ENCODE measurements at regions of chr4 and their contacts with region 1.

Region 1: DNA sequence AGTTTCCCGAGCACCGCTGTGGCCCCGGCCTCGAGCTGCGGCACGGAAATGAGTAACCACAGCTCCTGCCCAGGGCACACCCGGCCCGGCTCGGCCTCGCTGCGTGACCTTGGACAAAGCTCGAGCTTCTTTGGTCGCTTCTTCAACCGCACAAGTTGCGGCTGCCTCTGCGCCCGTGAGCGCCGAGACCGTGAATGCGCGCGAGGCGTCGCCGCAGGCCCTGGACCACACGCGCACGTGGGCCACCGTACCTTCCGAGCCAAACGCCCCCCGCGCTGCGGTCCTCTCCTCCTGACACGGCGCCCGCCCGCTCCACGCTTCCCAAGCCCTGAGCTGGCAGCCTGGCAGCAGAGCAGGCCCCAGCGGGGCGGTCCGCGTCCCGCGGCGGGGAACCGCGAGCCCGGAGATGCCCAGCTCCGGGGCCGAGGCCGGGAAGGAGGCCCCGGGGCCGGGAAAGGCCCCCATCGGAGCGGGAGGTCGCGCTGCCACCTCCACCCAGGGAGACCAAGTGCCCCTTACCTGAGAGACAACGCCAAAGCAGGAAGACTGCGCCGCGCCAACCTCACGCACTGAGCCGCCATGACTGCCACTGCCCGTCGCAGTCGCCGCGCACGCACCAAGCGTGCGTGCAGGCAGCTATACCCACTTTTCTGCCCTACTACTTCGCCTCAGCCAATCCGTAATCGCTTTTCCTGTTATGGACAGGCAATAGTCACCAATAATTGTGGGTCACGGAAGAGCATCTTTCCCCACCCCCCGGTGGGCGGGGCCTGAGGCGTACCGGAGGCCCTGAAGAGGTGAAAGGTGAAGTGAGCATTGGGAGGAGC is at the start of gene GRPEL1:
- DNase-seq: peak; percentile 98
- ATAC-seq: peak; percentile 95
- H3K4me3 ChIP-seq: peak within 1 kb of the TSS; percentile 74
- H3K27ac ChIP-seq: peak within 1 kb of the TSS; percentile 84
- H3K4me1 ChIP-seq: peaks cover 14% of the 10 kb centered on the region
- H3K27me3 ChIP-seq: no peaks in the 10 kb centered on the region; a peak in 1 of 4 replicates
- CTCF ChIP-seq: peak; percentile 5 to 13 (median 7); a peak in 1 of 6 replicates
- EP300 ChIP-seq: no peak
- POLR2A ChIP-seq: peak; percentile 99
- RAD21 ChIP-seq: no peak
- polyA plus RNA-seq, gene GRPEL1: 103 to 119 TPM

Region 2: DNA sequence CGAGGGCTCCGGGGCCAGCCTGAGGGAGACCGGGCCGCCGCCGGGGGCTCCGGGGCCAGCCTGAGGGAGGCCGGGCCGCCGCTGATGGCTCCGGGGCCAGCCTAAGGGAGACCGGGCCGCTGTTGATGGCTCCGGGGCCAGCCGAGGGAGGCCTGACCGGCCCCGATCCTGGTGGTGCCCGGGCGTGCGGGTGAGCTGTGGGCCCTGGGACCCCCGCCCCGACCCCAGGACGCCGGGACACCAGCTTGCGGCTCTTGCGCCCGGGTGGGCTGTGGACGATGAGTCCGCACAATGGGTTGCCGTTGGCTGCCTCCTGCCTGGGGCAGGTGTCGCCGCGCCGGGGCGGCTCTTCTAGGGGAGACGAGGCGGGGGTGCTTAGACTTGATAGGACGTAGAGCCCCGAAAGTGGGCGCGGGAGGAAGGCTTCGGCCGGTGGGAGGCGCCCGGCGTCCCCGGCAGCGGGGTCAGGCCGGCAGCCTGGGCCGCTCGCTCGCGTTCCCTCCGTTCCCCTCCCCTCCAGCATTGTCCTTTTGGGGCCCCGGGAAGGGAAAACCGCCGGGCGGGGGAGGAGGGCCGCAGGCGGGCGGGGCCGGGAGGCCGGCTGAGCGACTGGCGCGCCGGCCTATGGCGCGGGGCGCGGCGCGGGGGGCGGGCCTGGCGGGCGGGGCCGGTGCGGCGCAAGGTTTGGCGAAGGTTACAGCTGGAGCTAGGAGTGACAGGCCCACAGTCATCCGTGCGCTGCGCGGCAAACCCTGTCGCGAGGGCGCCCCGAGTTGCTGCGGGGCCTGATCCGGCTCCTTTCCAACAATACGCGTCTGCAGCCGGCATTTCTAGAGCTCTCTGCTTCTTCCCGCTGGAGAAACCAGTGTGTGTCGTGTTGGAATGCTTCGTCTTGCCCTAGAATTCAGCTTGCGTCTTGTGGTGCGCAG is 284.3 kb before region 1 on chr4:
- CTCF ChIA-PET with region 1: interaction called, 3 read pairs
- POLR2A ChIA-PET with region 1: no interaction called
- RAD21 ChIA-PET with region 1: interaction called, 4 read pairs
- SMC1A ChIA-PET with region 1: interaction called, 9 read pairs
- in situ Hi-C with region 1: no loop called
- intact Hi-C with region 1: loop called (anchors 5 kb)
- DNase-seq: peak; percentile 27
- ATAC-seq: peak; percentile 87
- H3K4me3 ChIP-seq: peak overlapping the region; percentile 89
- H3K27ac ChIP-seq: peak overlapping the region; percentile 88
- H3K4me1 ChIP-seq: 0 out of 2 replicates have a peak, but pooled peaks cover 6% of the 10 kb centered on the region
- H3K27me3 ChIP-seq: no peaks in the 10 kb centered on the region
- CTCF ChIP-seq: peak; percentile 19 to 42 (median 25); a peak in 3 of 6 replicates
- EP300 ChIP-seq: no peak
- POLR2A ChIP-seq: peak; percentile 78; the same call in 1 of the 2 replicates
- RAD21 ChIP-seq: peak; percentile 15; the same call in 1 of the 2 replicates

Region 3: GRCh38 chr4:6799091-6799490 is 268.6 kb before region 1 on chr4:
- CTCF ChIA-PET with region 1: no interaction called
- POLR2A ChIA-PET with region 1: no interaction called
- RAD21 ChIA-PET with region 1: no interaction called
- SMC1A ChIA-PET with region 1: no interaction called
- in situ Hi-C with region 1: no loop called
- intact Hi-C with region 1: no loop called
- DNase-seq: no peak
- ATAC-seq: no peak
- H3K4me3 ChIP-seq: no peak overlapping the region
- H3K27ac ChIP-seq: no peak overlapping the region
- H3K4me1 ChIP-seq: peaks cover 4% of the 10 kb centered on the region; the same call in 1 of the 2 replicates
- H3K27me3 ChIP-seq: no peaks in the 10 kb centered on the region
- CTCF ChIP-seq: no peak
- EP300 ChIP-seq: no peak
- POLR2A ChIP-seq: no peak
- RAD21 ChIP-seq: no peak

Region 4: GRCh38 chr4:6909073-6909965 is 158.3 kb before region 1 on chr4 and contains the start of gene TBC1D14:
- CTCF ChIA-PET with region 1: interaction called, 94 read pairs
- POLR2A ChIA-PET with region 1: interaction called, 18 read pairs
- RAD21 ChIA-PET with region 1: interaction called, 14 read pairs
- SMC1A ChIA-PET with region 1: interaction called, 18 read pairs
- in situ Hi-C with region 1: loop called (anchors 5 kb)
- intact Hi-C with region 1: loop called (anchors 1 kb)
- DNase-seq: no peak
- ATAC-seq: peak; percentile 94
- H3K4me3 ChIP-seq: peak within 1 kb of the TSS; percentile 97
- H3K27ac ChIP-seq: peak within 1 kb of the TSS; percentile 96
- H3K4me1 ChIP-seq: peaks cover 17% of the 10 kb centered on the region
- H3K27me3 ChIP-seq: 0 out of 4 replicates have a peak, but pooled peaks cover 0 to 3% of the 10 kb centered on the region in 2 experiments
- CTCF ChIP-seq: no peak; a peak in 2 of 6 replicates
- EP300 ChIP-seq: no peak
- POLR2A ChIP-seq: peak; percentile 82
- RAD21 ChIP-seq: no peak
- polyA plus RNA-seq, gene TBC1D14: 0.87 to 1.1 TPM

Region 5: GRCh38 chr4:6974138-6974848 is 93.4 kb before region 1 on chr4:
- CTCF ChIA-PET with region 1: interaction called, 80 read pairs
- POLR2A ChIA-PET with region 1: interaction called, 3 read pairs
- RAD21 ChIA-PET with region 1: interaction called, 20 read pairs
- SMC1A ChIA-PET with region 1: interaction called, 9 read pairs
- in situ Hi-C with region 1: no loop called
- intact Hi-C with region 1: loop called (anchors 1 kb)
- DNase-seq: peak; percentile 40
- ATAC-seq: peak; percentile 86
- H3K4me3 ChIP-seq: no peak overlapping the region
- H3K27ac ChIP-seq: no peak overlapping the region
- H3K4me1 ChIP-seq: peaks cover 18% of the 10 kb centered on the region
- H3K27me3 ChIP-seq: no peaks in the 10 kb centered on the region
- CTCF ChIP-seq: peak; percentile 90 to 99 (median 99)
- EP300 ChIP-seq: no peak
- POLR2A ChIP-seq: no peak
- RAD21 ChIP-seq: peak; percentile 82

Region 6: GRCh38 chr4:7013175-7013574 is 54.5 kb before region 1 on chr4:
- CTCF ChIA-PET with region 1: interaction called, 14 read pairs
- POLR2A ChIA-PET with region 1: interaction called, 3 read pairs
- RAD21 ChIA-PET with region 1: interaction called, 3 read pairs
- SMC1A ChIA-PET with region 1: interaction called, 4 read pairs
- in situ Hi-C with region 1: no loop called
- intact Hi-C with region 1: no loop called
- DNase-seq: no peak
- ATAC-seq: peak; percentile 58
- H3K4me3 ChIP-seq: no peak overlapping the region
- H3K27ac ChIP-seq: peak overlapping the region; percentile 85
- H3K4me1 ChIP-seq: peaks cover 17% of the 10 kb centered on the region
- H3K27me3 ChIP-seq: no peaks in the 10 kb centered on the region
- CTCF ChIP-seq: no peak
- EP300 ChIP-seq: no peak
- POLR2A ChIP-seq: no peak
- RAD21 ChIP-seq: no peak

Region 7: DNA sequence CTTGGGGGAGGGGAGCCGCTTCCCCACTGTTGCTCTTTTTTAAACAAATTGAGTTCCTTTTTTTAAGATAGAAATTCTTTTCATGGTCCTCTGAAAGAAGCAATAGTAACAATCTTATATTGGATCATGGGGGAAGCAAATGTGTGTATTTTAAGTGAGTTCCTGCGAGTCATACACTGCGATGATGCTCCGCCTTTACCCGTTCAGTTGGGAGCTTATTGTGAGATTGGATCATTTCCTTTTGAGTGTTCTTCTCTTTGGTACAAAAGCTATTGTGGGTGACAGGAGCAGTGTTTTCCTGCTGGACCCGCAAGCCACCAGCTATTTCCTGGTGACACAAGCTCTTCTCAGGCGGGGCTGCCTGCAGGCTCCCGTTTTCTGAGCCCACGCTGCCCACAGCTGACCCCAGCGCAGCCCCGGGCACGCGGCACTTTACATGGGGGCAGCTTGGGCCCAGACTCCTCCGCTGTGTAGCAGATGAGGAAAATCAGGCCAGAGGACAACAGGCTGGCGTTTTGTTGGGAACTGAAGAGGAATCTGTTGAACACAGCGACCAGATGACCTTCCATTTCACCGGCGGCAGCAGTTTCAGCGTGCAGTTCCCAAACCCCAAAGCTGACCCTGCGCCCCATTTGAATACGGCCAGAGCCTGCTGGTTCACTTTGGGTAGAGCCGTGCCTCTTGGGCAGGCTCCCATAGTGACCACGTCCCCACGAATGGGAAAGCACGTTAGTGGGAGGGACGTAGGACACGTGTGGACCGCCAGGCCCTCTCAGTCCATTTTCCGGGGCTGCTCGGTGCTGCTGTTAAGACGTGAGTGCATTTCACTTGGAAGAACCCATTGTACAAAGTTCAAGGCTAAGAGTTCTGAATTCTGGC is 12.3 kb before region 1 on chr4:
- CTCF ChIA-PET with region 1: interaction called, 41 read pairs
- POLR2A ChIA-PET with region 1: interaction called, 4 read pairs
- RAD21 ChIA-PET with region 1: interaction called, 6 read pairs
- SMC1A ChIA-PET with region 1: interaction called, 6 read pairs
- in situ Hi-C with region 1: no loop called
- intact Hi-C with region 1: no loop called
- DNase-seq: no peak
- ATAC-seq: no peak
- H3K4me3 ChIP-seq: no peak overlapping the region
- H3K27ac ChIP-seq: no peak overlapping the region
- H3K4me1 ChIP-seq: peaks cover 14% of the 10 kb centered on the region
- H3K27me3 ChIP-seq: no peaks in the 10 kb centered on the region
- CTCF ChIP-seq: no peak
- EP300 ChIP-seq: no peak
- POLR2A ChIP-seq: no peak
- RAD21 ChIP-seq: no peak

Region 8: DNA sequence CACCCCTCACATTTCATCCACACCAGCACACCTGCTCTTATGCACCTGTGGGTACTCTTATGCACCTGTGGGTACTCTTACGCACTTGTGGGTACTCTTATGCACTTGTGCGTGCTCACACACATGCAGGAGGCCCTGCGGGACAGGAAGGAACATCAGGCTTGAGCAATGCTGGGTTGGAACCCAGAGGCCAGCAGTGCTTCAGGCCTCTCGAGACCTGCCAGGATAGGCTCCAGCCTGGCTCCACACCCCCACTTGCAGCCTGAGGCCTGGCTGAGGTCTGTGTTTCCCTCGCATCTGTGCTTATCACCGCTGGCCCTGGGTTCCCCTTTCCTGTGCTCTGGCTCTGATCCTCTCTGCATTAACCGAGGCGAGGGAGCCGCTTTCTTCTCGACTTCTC is 159.3 kb after region 1 on chr4:
- CTCF ChIA-PET with region 1: no interaction called
- POLR2A ChIA-PET with region 1: no interaction called
- RAD21 ChIA-PET with region 1: no interaction called
- SMC1A ChIA-PET with region 1: no interaction called
- in situ Hi-C with region 1: no loop called
- intact Hi-C with region 1: no loop called
- DNase-seq: no peak
- ATAC-seq: no peak
- H3K4me3 ChIP-seq: no peak overlapping the region
- H3K27ac ChIP-seq: no peak overlapping the region
- H3K4me1 ChIP-seq: no peaks in the 10 kb centered on the region
- H3K27me3 ChIP-seq: no peaks in the 10 kb centered on the region; a peak in 3 of 4 replicates
- CTCF ChIP-seq: no peak
- EP300 ChIP-seq: no peak
- POLR2A ChIP-seq: no peak
- RAD21 ChIP-seq: no peak

Measured in GM12878 (cell line).